Lower leg skin (tissue), 4 donors: ENCODE measurements at regions of chr17 and their contacts with region 1.

Region 1: DNA sequence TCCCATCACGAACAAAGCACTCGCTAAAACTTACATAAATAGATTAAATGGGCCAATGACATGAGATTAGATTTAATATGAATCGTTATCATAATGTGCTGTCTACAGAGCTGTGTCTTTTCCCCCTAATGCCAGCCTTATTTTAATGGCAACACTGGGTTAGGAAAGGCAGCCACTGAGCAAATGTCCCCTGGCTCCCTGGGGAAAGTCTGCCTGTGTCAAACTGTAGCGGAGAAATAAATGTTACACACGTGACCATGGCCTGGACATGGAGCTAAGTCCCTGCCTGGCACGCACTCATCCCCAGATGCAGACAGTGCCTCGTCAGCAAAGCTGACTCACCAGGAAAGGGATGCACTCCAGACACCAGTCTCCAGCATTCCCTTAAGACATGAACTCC is 61.3 kb upstream of the SDK2 start:
- DNase-seq: no peak
- H3K4me3 ChIP-seq: no peak overlapping the region
- CTCF ChIP-seq: no peak
- POLR2A ChIP-seq: no peak

Region 2: GRCh38 chr17:73429440-73430164 is 276.0 kb before region 1 on chr17:
- intact Hi-C with region 1: loop called (anchors 10 kb)
- DNase-seq: peak; percentile 79 to 96
- H3K4me3 ChIP-seq: no peak overlapping the region
- CTCF ChIP-seq: peak in 1 of 3 donors; percentile 90
- POLR2A ChIP-seq: no peak